ENCODE measurements at regions of chr18 and their contacts with region 1.

Region 1: DNA sequence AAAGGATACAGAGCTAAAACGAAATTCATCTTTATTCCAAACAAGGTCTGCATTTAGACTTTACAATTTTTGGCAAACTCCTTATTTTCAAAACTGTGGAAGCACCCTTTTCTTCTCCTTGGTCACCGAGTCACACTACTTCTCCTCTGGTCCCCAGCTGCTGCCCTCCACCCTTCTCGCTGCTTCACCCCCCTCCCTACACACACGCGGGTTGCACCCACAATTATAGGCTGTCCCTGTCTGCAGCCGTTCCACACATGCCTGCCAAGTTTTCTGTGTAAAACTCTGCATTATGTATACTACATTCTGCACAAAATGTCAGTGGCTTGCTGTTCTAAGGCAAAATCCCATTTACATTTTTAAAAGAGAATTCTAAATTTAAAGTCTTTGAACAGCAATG is 63.5 kb downstream of the PTPN2 start:
- DNase-seq: no peak
- ATAC-seq: no peak
- H3K4me3 ChIP-seq: no peak overlapping the region
- H3K27ac ChIP-seq: no peak overlapping the region
- H3K4me1 ChIP-seq: peaks cover 11% of the 10 kb centered on the region
- H3K27me3 ChIP-seq: no peaks in the 10 kb centered on the region
- CTCF ChIP-seq: no peak
- EP300 ChIP-seq: no peak
- POLR2A ChIP-seq: no peak
- RAD21 ChIP-seq: no peak

Region 2: DNA sequence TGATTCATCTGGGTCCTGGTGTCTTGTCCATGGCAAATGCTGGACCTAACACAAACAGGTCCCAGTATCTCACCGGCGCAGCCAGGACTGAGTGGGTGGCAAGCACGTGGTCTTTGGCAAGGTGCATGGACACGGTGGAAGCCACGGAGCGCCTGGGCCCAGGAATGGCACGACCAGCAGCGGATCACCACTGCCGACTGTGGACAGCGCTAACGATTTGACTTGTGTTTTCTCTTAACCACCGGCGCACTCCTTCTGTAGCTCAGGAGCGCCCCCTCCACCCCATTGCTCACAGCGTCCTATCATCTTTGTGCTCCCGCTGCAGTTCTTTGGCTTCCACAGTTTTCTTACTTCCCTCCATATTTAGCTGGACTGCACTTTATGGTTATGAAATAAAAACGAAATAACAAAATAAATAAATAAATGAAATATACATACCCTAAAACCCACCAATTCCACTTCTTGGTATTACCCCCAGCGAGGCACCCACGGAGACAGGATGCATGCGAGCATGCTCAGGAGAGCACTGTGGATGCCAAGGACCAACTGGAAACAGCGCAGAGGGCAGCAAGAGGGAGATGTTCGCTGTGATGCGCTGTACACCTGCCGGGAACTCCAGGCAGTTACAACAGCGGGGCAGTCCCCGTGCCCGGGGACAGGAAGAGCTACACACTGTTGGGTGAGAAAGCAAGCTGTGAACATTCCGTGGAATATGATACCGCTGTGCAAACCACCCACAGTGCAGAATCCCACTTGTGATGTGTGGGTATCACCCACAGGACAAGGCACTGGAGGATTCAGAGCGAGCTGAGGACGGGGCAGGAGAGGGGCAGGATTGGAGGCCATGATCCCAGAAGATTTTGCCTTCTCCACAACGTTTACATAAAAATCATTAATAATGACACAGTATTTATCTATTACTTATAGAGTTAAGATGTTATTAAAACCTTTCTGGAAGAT is 573.4 kb before region 1 on chr18:
- CTCF ChIA-PET with region 1: no interaction called
- POLR2A ChIA-PET with region 1: no interaction called
- RAD21 ChIA-PET with region 1: no interaction called
- SMC1A ChIA-PET with region 1: no interaction called
- in situ Hi-C with region 1: no loop called
- intact Hi-C with region 1: no loop called
- DNase-seq: no peak
- ATAC-seq: no peak
- H3K4me3 ChIP-seq: no peak overlapping the region
- H3K27ac ChIP-seq: no peak overlapping the region
- H3K4me1 ChIP-seq: no peaks in the 10 kb centered on the region
- H3K27me3 ChIP-seq: no peaks in the 10 kb centered on the region; a peak in 1 of 4 replicates
- CTCF ChIP-seq: peak; percentile 17 to 38 (median 26); a peak in 3 of 6 replicates
- EP300 ChIP-seq: no peak
- POLR2A ChIP-seq: no peak
- RAD21 ChIP-seq: peak; percentile 20; the same call in 1 of the 2 replicates

Region 3: DNA sequence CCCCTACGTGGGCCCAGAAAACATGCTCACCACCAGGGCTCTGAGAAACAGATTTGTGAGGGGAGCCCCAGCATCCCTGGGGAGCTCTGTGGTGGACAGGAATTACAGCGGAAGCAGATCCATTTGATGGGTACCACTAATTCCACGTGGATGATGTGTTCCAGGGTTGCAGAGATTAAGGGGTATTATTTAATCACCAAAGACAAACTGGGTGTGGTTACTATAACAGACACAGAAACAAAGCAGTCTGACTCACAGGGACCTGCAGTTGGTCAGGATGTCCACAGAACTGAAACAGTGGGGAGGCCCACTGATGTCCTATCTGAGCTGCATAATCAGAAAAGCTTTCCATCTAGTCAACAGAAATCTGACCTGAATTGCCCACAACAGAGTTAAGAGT is 51.9 kb before region 1 on chr18:
- CTCF ChIA-PET with region 1: no interaction called
- POLR2A ChIA-PET with region 1: no interaction called
- RAD21 ChIA-PET with region 1: no interaction called
- SMC1A ChIA-PET with region 1: interaction called, 3 read pairs
- in situ Hi-C with region 1: no loop called
- intact Hi-C with region 1: loop called (anchors 10 kb)
- DNase-seq: no peak
- ATAC-seq: no peak
- H3K4me3 ChIP-seq: no peak overlapping the region
- H3K27ac ChIP-seq: no peak overlapping the region
- H3K4me1 ChIP-seq: no peaks in the 10 kb centered on the region
- H3K27me3 ChIP-seq: no peaks in the 10 kb centered on the region; a peak in 2 of 4 replicates
- CTCF ChIP-seq: no peak
- EP300 ChIP-seq: no peak
- POLR2A ChIP-seq: no peak
- RAD21 ChIP-seq: no peak

Measured in GM12878 (cell line).